HepG2 (cell line): ENCODE measurements at regions of chr18 and their contacts with region 1.

Region 1: DNA sequence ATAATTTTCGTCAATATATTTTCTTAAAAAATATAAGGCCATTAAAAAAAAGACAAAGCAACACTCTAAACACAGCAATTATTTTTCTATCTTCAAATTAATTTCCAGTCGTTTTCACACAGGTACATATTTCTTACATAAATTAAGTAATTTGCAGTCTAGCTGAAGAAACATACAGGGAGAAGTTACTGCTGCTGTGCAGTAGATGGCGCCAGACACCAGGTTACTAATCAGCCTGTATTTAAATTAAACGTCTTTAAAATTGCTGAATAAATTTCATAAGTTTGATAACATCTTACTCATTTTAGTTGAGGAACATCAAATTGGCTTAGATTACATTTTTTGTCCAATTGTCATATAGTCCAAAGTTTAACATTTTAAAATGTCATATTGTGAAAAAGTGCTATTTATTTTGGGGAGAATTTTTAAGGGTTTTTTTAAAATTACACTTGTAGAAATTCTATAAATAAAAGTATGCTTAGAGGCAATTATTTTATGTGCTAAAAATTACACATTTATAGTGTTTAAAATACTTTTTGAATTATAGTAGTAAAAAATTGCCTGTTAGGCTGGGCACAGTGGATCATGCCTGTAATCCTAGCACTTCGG is 88.4 kb downstream of the PMAIP1 start:
- DNase-seq: peak; percentile 23
- ATAC-seq: no peak
- H3K4me3 ChIP-seq: no peak overlapping the region
- H3K27ac ChIP-seq: no peak overlapping the region
- H3K4me1 ChIP-seq: no peaks in the 10 kb centered on the region
- H3K27me3 ChIP-seq: peaks cover 0 to 4% of the 10 kb centered on the region in 2 experiments; a peak in 2 of 5 replicates
- CTCF ChIP-seq: peak; percentile 69
- EP300 ChIP-seq: no peak
- POLR2A ChIP-seq: no peak
- RAD21 ChIP-seq: peak; percentile 35; the same call in 1 of the 2 replicates

Region 2: GRCh38 chr18:60247103-60247502 is 258.9 kb after region 1 on chr18:
- CTCF ChIA-PET with region 1: no interaction called
- POLR2A ChIA-PET with region 1: no interaction called
- in situ Hi-C with region 1: no loop called
- intact Hi-C with region 1: no loop called
- DNase-seq: no peak
- ATAC-seq: no peak
- H3K4me3 ChIP-seq: no peak overlapping the region
- H3K27ac ChIP-seq: no peak overlapping the region
- H3K4me1 ChIP-seq: no peaks in the 10 kb centered on the region
- H3K27me3 ChIP-seq: no peaks in the 10 kb centered on the region
- CTCF ChIP-seq: no peak
- EP300 ChIP-seq: no peak
- POLR2A ChIP-seq: no peak
- RAD21 ChIP-seq: no peak

Region 3: GRCh38 chr18:60266558-60266957 is 278.4 kb after region 1 on chr18:
- CTCF ChIA-PET with region 1: no interaction called
- POLR2A ChIA-PET with region 1: no interaction called
- in situ Hi-C with region 1: no loop called
- intact Hi-C with region 1: no loop called
- DNase-seq: no peak
- ATAC-seq: no peak
- H3K4me3 ChIP-seq: no peak overlapping the region
- H3K27ac ChIP-seq: no peak overlapping the region
- H3K4me1 ChIP-seq: no peaks in the 10 kb centered on the region
- H3K27me3 ChIP-seq: no peaks in the 10 kb centered on the region
- CTCF ChIP-seq: no peak
- EP300 ChIP-seq: no peak
- POLR2A ChIP-seq: no peak
- RAD21 ChIP-seq: no peak

Region 4: GRCh38 chr18:60413944-60414547 is 425.8 kb after region 1 on chr18:
- CTCF ChIA-PET with region 1: interaction called, 3 read pairs
- POLR2A ChIA-PET with region 1: no interaction called
- in situ Hi-C with region 1: loop called (anchors 10 kb)
- intact Hi-C with region 1: loop called (anchors 1 kb)
- DNase-seq: peak; percentile 2
- ATAC-seq: peak; percentile 85
- H3K4me3 ChIP-seq: no peak overlapping the region
- H3K27ac ChIP-seq: no peak overlapping the region
- H3K4me1 ChIP-seq: no peaks in the 10 kb centered on the region
- H3K27me3 ChIP-seq: no peaks in the 10 kb centered on the region
- CTCF ChIP-seq: peak; percentile 62
- EP300 ChIP-seq: no peak
- POLR2A ChIP-seq: no peak
- RAD21 ChIP-seq: no peak

Region 5: GRCh38 chr18:60549338-60549960 is 561.2 kb after region 1 on chr18:
- CTCF ChIA-PET with region 1: interaction called, 17 read pairs
- POLR2A ChIA-PET with region 1: no interaction called
- in situ Hi-C with region 1: loop called (anchors 10 kb)
- intact Hi-C with region 1: loop called (anchors 2 kb)
- DNase-seq: peak; percentile 44
- ATAC-seq: no peak
- H3K4me3 ChIP-seq: no peak overlapping the region
- H3K27ac ChIP-seq: no peak overlapping the region
- H3K4me1 ChIP-seq: no peaks in the 10 kb centered on the region
- H3K27me3 ChIP-seq: no peaks in the 10 kb centered on the region; a peak in 1 of 5 replicates
- CTCF ChIP-seq: peak; percentile 63
- EP300 ChIP-seq: no peak
- POLR2A ChIP-seq: no peak
- RAD21 ChIP-seq: peak; percentile 24; the same call in 1 of the 2 replicates

Region 6: DNA sequence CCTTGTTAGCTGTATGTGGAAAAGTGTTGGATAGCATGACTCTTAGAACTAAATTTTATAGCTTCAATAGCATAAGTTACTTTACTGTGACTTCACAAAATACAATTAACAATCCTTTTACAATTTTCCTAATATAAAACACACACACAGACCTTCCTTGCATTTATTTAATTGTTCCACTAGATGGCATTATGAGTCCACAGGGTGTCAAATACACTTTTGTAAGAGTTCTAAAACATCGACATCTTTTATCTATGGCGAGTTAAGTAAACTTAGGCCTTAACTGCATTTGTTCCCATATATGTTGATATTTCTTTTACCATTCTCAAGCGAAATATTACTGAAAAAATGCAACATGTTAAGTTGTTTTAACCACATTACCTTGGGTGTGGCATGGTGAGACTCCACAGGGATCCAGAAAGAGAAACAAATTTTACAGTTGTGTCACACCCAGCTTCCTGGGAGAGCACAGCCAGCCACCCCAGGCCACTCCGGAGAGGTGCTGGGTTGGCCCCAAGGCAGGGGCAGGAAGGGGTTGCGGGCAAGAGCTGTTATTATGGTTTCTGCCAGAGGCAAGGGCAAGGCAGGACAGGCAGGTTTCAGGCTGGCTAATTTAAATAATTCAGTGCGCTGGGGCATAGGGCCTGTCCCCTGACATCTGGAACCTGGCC is 696.8 kb after region 1 on chr18:
- CTCF ChIA-PET with region 1: no interaction called
- POLR2A ChIA-PET with region 1: no interaction called
- in situ Hi-C with region 1: no loop called
- intact Hi-C with region 1: loop called (anchors 10 kb)
- DNase-seq: peak; percentile 2
- ATAC-seq: peak; percentile 38; the same call in 1 of the 3 replicates
- H3K4me3 ChIP-seq: no peak overlapping the region
- H3K27ac ChIP-seq: no peak overlapping the region
- H3K4me1 ChIP-seq: no peaks in the 10 kb centered on the region
- H3K27me3 ChIP-seq: no peaks in the 10 kb centered on the region
- CTCF ChIP-seq: peak; percentile 51
- EP300 ChIP-seq: no peak
- POLR2A ChIP-seq: no peak
- RAD21 ChIP-seq: no peak

Region 7: GRCh38 chr18:60698901-60699300 is 710.7 kb after region 1 on chr18:
- CTCF ChIA-PET with region 1: no interaction called
- POLR2A ChIA-PET with region 1: no interaction called
- in situ Hi-C with region 1: no loop called
- intact Hi-C with region 1: loop called (anchors 5 kb)
- DNase-seq: no peak
- ATAC-seq: no peak
- H3K4me3 ChIP-seq: no peak overlapping the region
- H3K27ac ChIP-seq: no peak overlapping the region
- H3K4me1 ChIP-seq: no peaks in the 10 kb centered on the region
- H3K27me3 ChIP-seq: no peaks in the 10 kb centered on the region
- CTCF ChIP-seq: no peak
- EP300 ChIP-seq: no peak
- POLR2A ChIP-seq: no peak
- RAD21 ChIP-seq: no peak